Activated CD8-positive, alpha-beta T cell treated with anti-CD3 and anti-CD28 coated beads for 36 hours (primary cell): ENCODE measurements at regions of chr7 and their contacts with region 1.

Region 1: GRCh38 chr7:873367-874002 is 2.9 kb upstream of the GET4 start:
- DNase-seq: peak; percentile 76
- ATAC-seq: peak; percentile 55
- H3K4me3 Mint-ChIP-seq: no peak overlapping the region
- H3K27ac Mint-ChIP-seq: peak overlapping the region; percentile 75
- H3K4me1 Mint-ChIP-seq: peaks cover 27% of the 10 kb centered on the region
- H3K27me3 Mint-ChIP-seq: no peaks in the 10 kb centered on the region
- CTCF ChIP-seq: peak; percentile 99

Region 2: DNA sequence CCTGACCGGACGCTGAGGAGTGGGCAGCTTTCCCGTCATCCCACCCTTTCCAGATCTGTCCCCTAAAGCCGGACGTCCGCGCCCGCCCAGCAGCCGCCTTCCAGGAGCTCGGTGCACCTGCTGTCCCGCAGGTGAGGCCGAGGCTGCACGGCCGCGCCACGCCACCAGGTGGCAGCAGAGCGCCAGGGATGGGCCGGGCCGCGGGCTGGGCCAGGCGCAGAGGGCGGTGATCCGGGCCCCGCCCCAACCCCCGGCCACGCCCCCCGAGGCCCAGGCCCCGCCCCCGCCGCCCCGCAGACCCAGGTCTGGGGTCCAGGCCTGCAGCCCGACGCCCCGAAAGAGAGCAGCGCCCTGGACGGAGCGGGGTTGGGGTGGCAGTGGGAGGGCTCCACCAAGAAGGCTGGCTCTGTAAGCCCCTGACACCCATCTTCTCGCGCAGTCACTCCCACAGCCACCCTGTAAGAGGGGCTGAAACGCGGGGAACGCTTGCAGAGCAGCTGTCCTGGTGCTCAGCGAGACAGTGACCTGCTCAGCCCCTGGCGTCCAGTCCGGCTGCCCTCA is 551.3 kb before region 1 on chr7:
- CTCF ChIA-PET with region 1: interaction called, 7 read pairs
- POLR2A ChIA-PET with region 1: no interaction called
- intact Hi-C with region 1: loop called (anchors 5 kb)
- DNase-seq: peak; percentile 81
- ATAC-seq: peak; percentile 100
- H3K4me3 Mint-ChIP-seq: no peak overlapping the region
- H3K27ac Mint-ChIP-seq: no peak overlapping the region
- H3K4me1 Mint-ChIP-seq: no peaks in the 10 kb centered on the region
- H3K27me3 Mint-ChIP-seq: peaks cover 16% of the 10 kb centered on the region
- CTCF ChIP-seq: peak; percentile 91

Region 3: DNA sequence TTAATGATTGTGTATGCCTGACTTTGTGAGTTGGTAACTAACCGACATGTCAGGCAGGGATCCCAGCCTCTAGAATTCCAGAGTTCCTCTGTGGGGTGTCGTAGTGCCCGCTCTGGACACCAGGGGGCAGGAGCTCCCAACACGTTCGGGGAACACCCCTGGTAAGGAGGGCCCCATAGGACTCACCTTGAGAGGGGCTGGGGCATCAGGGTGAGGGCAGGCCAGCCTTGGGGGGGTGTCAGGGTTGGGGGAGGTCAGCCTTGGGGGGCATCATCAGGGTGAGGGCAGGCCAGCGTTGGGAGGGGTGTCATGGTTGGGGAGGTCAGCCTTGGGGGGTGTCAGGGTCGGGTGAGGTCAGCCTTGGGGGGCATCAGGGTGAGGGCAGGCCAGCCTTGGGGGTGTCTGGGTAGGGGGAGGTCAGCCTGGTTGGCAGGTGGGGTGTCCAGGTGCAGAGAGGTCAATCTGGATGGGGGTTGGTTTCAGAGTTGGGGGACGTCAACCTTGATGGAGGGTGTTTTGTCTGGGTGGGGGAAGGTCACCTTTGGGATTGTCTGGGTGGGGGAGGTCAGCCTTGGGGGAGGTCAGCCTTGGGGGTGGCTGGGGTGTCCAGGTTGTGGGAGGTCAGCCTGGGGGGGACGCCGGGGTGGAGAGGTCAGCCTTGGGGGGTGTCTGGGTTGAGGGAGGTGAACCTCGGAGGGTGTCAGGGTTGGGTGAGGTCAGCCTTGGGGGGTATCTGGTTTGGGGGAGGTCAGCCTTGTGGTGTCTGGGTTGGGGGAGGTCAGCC is 86.8 kb before region 1 on chr7:
- CTCF ChIA-PET with region 1: interaction called, 65 read pairs
- POLR2A ChIA-PET with region 1: interaction called, 4 read pairs
- intact Hi-C with region 1: loop called (anchors 1 kb)
- DNase-seq: peak; percentile 77
- ATAC-seq: peak; percentile 99
- H3K4me3 Mint-ChIP-seq: no peak overlapping the region
- H3K27ac Mint-ChIP-seq: no peak overlapping the region
- H3K4me1 Mint-ChIP-seq: no peaks in the 10 kb centered on the region
- H3K27me3 Mint-ChIP-seq: no peaks in the 10 kb centered on the region
- CTCF ChIP-seq: peak; percentile 83

Region 4: DNA sequence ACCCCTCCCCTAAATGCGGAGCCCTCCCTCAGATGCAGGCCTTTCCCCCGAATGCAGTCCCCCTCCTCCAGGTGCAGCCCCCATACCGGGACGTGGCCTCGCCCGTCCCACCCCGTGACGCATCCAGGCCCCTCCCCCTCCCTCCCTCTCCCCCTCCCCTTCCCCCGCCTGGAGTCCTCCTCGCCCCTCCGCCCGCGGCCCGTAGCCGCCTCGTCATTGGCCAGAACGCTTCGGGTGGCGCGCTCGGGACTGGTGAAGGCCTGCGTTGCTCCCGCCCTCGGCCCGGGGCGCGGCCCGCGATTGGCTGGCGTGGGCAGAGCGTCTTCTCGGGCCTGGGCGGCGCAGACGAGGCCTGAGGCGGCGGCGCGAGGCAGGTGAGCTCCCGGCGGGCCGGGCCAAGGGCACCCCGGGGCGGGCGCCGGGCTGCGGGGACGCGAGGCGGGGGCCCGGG is 57.2 kb before region 1 on chr7:
- CTCF ChIA-PET with region 1: interaction called, 16 read pairs
- POLR2A ChIA-PET with region 1: interaction called, 6 read pairs
- intact Hi-C with region 1: no loop called
- DNase-seq: peak; percentile 97
- ATAC-seq: peak; percentile 97
- H3K4me3 Mint-ChIP-seq: peak overlapping the region; percentile 67
- H3K27ac Mint-ChIP-seq: no peak overlapping the region
- H3K4me1 Mint-ChIP-seq: peaks cover 55% of the 10 kb centered on the region
- H3K27me3 Mint-ChIP-seq: peaks cover 15% of the 10 kb centered on the region
- CTCF ChIP-seq: no peak

Region 5: DNA sequence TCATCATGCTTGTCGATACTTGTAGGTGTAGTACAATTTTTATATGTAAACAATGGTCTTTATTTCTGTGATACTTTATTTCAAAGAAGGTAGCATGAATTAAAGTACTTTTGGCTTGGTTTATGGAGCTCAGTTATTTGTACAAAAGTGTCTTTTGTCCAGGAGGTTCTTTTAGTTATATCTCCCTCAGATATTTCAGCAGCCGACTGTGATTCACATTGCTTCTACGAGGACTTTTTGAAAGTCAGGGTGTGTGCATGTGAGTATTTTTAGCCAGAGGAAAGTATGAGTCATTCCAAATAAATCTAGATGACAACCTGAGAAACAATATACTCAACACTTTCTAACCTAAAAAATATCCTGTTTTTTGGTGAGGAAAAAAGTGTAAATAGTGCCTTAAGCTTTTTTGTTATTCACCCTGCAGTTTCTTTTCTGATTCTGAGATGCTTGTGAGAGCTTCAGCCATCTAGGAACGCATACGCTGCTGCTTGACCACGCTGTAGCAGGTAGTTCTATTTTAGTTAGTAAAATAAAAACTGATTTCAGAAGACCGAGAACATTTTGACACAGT is 41.8 kb before region 1 on chr7:
- CTCF ChIA-PET with region 1: interaction called, 25 read pairs
- POLR2A ChIA-PET with region 1: interaction called, 3 read pairs
- intact Hi-C with region 1: no loop called
- DNase-seq: peak; percentile 41
- ATAC-seq: peak; percentile 65
- H3K4me3 Mint-ChIP-seq: peak overlapping the region; percentile 65
- H3K27ac Mint-ChIP-seq: peak overlapping the region; percentile 98
- H3K4me1 Mint-ChIP-seq: peaks cover 56% of the 10 kb centered on the region
- H3K27me3 Mint-ChIP-seq: no peaks in the 10 kb centered on the region
- CTCF ChIP-seq: no peak

Region 6: DNA sequence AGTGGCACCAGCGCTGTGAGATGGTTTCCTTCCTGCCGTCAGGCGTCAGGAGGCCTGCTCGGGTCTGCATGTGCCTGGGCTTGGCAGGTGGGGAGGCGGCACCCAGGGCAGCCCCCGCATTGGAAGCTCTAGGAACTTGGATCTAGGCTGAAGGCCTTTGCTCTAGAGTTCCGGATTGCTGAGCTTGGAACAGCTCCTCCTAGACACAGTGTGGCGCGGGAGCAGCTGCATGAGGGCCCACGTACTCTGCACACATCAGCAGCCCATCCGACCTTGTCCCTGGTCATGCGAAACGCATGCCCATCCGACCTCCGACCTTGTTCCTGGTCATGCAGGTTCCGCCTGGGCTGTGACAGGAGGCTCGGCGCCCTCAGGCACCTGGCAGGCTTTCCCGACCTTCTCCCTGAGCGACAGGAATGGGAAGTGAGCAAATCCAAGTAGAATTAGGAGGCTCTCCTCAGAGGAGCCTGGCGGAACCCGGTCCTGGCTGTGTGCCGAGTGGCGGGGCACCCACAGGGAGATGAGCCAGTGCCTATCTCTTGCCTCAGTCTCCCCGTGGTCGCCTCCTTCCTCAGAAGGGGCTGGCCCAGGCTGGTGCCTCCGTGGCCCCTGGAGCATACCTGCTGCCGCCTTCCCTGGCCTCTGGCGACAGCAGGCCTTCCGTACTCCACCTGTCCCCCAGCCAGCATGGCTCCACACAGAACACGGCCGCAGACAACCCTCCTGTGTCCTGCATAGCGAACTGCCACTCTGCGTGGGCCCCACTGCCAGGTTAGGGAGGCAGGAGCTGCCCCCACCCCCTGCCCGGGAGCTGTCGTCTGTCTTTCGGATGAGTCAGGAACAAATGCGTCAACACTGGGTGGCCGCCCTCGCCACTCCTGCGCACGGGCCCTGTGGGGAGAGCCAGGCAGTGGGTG is 14.9 kb after region 1 on chr7:
- CTCF ChIA-PET with region 1: no interaction called
- POLR2A ChIA-PET with region 1: no interaction called
- intact Hi-C with region 1: no loop called
- DNase-seq: no peak
- ATAC-seq: no peak
- H3K4me3 Mint-ChIP-seq: no peak overlapping the region
- H3K27ac Mint-ChIP-seq: no peak overlapping the region
- H3K4me1 Mint-ChIP-seq: peaks cover 9% of the 10 kb centered on the region
- H3K27me3 Mint-ChIP-seq: no peaks in the 10 kb centered on the region
- CTCF ChIP-seq: no peak